Activated T-helper 2 cell treated with anti-CD3 and anti-CD28 coated beads, Interferon-gamma antibody, Interleukin-2, Interleukin-4, amounts not matched to agents 10 μg/mL and 5 μg/mL and 100 μg/mL, durations not matched to agents 14 hours and 24 hours and 36 hours (primary cell): ENCODE measurements at regions of chr9 and their contacts with region 1.

Region 1: GRCh38 chr9:99140685-99141314 is 35.9 kb downstream of the TGFBR1 start:
- DNase-seq: no peak
- H3K4me3 Mint-ChIP-seq: no peak overlapping the region
- H3K27ac Mint-ChIP-seq: no peak overlapping the region
- H3K4me1 Mint-ChIP-seq: peaks cover 22% of the 10 kb centered on the region
- H3K27me3 Mint-ChIP-seq: no peaks in the 10 kb centered on the region

Region 2: DNA sequence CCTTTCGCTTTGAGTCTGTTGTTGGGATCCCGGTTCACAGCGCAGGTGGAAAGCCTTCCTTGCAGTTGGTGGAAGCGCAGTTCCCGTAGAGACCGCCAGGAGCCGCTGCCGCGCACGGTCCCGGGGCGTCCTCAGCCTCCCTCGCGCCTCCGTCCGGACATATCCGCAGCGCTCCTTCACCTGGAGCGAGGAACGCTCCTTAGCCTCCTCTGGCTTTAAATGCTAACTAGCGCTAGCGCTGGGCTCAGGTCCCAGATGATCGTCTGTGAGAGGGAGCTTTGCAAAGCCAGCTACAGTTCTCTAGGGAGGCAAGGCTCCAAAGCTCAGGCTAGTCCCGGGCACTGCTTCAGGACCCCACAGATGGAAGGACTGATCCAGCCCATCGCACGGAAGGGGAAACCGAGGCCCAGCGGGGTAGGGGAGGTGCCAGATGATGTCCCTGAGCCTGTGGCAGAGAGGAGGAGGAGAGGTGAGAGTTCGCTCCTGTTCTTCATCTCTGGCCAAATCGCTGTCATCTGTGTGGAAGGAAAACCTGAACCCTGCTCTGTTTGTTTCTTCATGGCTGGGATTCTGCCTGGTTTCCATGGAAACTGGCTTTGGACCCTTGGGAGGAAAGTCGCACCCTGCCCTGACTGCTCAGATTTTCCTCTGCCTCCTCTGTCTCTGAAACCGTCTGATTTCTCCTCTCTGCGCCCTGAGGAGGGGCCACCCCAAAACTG is 165.6 kb before region 1 on chr9:
- intact Hi-C with region 1: loop called (anchors 1 kb)
- DNase-seq: peak; percentile 70
- H3K4me3 Mint-ChIP-seq: no peak overlapping the region
- H3K27ac Mint-ChIP-seq: no peak overlapping the region
- H3K4me1 Mint-ChIP-seq: peaks cover 11% of the 10 kb centered on the region
- H3K27me3 Mint-ChIP-seq: peaks cover 33% of the 10 kb centered on the region

Region 3: GRCh38 chr9:99104459-99105151 is 36.2 kb before region 1 on chr9 and contains the start of gene TGFBR1:
- intact Hi-C with region 1: loop called (anchors 5 kb)
- DNase-seq: peak; percentile 96
- H3K4me3 Mint-ChIP-seq: peak within 1 kb of the TSS; percentile 90
- H3K27ac Mint-ChIP-seq: peak within 1 kb of the TSS; percentile 88
- H3K4me1 Mint-ChIP-seq: peaks cover 50% of the 10 kb centered on the region
- H3K27me3 Mint-ChIP-seq: no peaks in the 10 kb centered on the region
- total RNA-seq, gene TGFBR1: 30.6 and 30.8 TPM in 2 replicates